ENCODE measurements at regions of chr15 and their contacts with region 1.

Region 1: GRCh38 chr15:77543159-77543882 is 89.4 kb downstream of the LINGO1 start:
- DNase-seq: peak; percentile 93
- CTCF ChIP-seq: peak; percentile 91

Region 2: DNA sequence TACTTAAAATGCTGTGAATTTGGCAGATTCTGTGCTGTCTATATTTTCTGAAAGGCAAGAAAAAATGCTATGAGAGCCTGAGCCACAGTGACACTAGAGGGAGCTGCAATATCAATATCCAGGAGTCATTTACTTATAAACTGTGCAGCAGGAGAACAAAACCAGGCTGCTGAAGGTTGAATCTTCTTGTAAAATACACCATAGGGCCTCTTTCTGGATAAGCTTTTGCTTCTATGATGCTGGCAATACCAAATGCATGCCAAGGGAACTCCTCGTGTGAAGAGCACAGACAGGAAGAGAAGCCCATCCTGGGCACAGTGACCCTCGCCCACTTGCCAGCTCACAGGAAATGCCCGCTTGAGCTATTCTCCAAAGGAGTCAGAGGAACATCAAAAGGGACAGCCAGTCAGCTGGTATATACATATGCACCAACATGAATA is 424.4 kb before region 1 on chr15:
- in situ Hi-C with region 1: loop called (anchors 10 kb)
- DNase-seq: peak; percentile 53
- CTCF ChIP-seq: peak; percentile 78